Body of pancreas (tissue), 4 donors: ENCODE measurements at regions of chr17 and their contacts with region 1.

Region 1: DNA sequence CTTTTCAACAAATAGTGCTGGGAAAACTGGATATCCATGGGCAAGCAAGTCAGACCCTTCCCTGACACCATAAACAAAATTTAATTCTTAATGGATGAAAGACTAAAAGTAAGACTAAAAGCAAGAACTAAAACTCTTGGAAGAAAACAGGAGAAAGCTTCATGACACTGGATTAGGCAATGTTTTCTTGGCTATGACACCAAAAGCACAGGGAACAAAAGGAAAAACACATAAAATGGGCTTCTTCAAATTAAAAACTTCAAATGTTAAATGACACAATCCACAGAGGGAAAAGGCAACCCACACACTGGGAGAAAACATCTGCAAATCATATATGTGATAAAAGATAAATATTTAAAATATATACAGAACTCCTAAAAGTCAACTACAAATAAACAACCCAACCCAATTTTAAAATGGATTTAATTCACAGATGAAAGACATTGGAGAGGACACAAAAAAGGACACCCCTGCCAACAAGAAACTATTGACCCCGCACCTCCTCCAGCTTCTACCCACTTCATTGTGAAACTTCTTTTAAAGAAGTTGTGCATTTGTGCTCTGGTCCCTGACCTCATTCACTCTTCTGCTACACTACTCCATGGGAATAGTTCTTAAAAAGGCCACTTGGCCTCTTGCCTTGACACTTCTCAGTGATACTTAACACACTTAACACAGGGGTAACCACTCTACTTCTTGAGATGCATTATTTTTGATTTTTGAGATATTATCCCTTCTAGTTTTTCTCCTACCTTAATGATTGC is 80.3 kb downstream of the TRIM37 start:
- DNase-seq: no peak
- ATAC-seq: no peak
- H3K4me3 ChIP-seq: no peak overlapping the region
- H3K27ac ChIP-seq: no peak overlapping the region
- H3K4me1 ChIP-seq: no peaks in the 10 kb centered on the region
- H3K27me3 ChIP-seq: no peaks in the 10 kb centered on the region
- CTCF ChIP-seq: no peak
- POLR2A ChIP-seq: no peak

Region 2: DNA sequence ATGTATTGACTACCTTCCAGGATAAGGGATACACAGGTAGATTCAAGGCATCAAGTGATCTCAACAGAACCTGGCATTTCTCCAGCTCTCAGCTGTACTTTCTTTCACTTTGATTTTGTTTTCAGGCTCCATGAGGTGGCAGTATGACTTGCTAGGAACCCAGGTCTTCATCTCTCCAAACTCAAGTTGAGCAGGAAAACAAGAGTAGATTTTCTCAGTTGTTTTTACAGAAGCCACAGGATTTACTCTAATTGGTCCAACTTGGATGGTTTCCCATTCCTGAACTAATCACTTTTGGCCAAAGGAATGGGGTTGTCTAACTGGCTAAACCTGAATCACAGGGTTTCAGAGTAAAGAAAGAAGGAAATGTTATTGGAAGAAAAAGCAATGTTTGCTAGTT is 66.3 kb before region 1 on chr17:
- intact Hi-C with region 1: loop called (anchors 10 kb)
- DNase-seq: peak in 3 of 4 donors; percentile 13 to 41 (median 28)
- ATAC-seq: peak; percentile 52
- H3K4me3 ChIP-seq: no peak overlapping the region
- H3K27ac ChIP-seq: peak overlapping the region in 2 of 4 donors; percentile 14 to 41
- H3K4me1 ChIP-seq: peaks cover 6% of the 10 kb centered on the region
- H3K27me3 ChIP-seq: no peaks in the 10 kb centered on the region
- CTCF ChIP-seq: peak in 4 of 7 experiments; percentile 23 to 30 (median 26)
- POLR2A ChIP-seq: no peak

Region 3: GRCh38 chr17:59178266-59178978 is 152.1 kb after region 1 on chr17:
- intact Hi-C with region 1: no loop called
- DNase-seq: no peak
- ATAC-seq: no peak
- H3K4me3 ChIP-seq: no peak overlapping the region
- H3K27ac ChIP-seq: no peak overlapping the region
- H3K4me1 ChIP-seq: no peaks in the 10 kb centered on the region
- H3K27me3 ChIP-seq: no peaks in the 10 kb centered on the region
- CTCF ChIP-seq: no peak
- POLR2A ChIP-seq: no peak